ENCODE measurements at regions of chr17 and their contacts with region 1.

Region 1: GRCh38 chr17:45894022-45894784 is at the start of gene MAPT:
- DNase-seq: peak; percentile 93 to 97
- ATAC-seq: peak; percentile 75 to 93
- H3K4me3 ChIP-seq: peak within 1 kb of the TSS; percentile 69
- H3K27ac ChIP-seq: peak within 1 kb of the TSS; percentile 76 to 85
- H3K4me1 ChIP-seq: peaks cover 22% of the 10 kb centered on the region
- CTCF ChIP-seq: peak; percentile 99
- EP300 ChIP-seq: no peak
- POLR2A ChIP-seq: peak; percentile 92
- RAD21 ChIP-seq: peak; percentile 15 to 54; a peak in 4 of 5 replicates
- polyA plus RNA-seq, gene MAPT: 1.1 and 1.2 TPM in 2 replicates

Region 2: DNA sequence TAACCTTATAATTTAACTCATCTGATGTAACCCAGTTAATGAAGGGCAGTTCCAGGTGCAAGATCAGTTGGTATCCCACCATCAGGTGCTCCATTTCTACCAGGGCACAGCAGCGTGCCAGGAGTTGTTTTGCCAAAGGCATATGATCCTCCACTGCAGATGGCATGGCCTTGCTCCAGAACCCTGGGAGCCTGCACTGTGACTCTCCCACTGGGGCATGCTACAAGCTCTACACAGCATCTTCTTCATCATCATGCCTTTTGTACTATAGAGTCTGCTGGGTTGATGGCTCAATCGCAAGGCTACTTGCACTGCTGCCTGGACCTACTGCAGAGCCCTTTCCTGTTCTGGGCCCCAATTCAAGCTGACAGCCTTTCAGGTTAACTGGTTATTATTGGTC is 11.1 kb before region 1 on chr17:
- CTCF ChIA-PET with region 1: interaction called, 11 read pairs
- POLR2A ChIA-PET with region 1: no interaction called
- DNase-seq: no peak
- ATAC-seq: no peak
- H3K4me3 ChIP-seq: no peak overlapping the region
- H3K27ac ChIP-seq: no peak overlapping the region
- H3K4me1 ChIP-seq: no peaks in the 10 kb centered on the region
- CTCF ChIP-seq: no peak
- EP300 ChIP-seq: no peak
- POLR2A ChIP-seq: no peak
- RAD21 ChIP-seq: no peak

Region 3: GRCh38 chr17:45907750-45908395 is 13.7 kb after region 1 on chr17:
- CTCF ChIA-PET with region 1: interaction called, 10 read pairs
- POLR2A ChIA-PET with region 1: no interaction called
- DNase-seq: no peak
- ATAC-seq: no peak
- H3K4me3 ChIP-seq: no peak overlapping the region
- H3K27ac ChIP-seq: no peak overlapping the region
- H3K4me1 ChIP-seq: 0 out of 3 replicates have a peak, but pooled peaks cover 4% of the 10 kb centered on the region
- CTCF ChIP-seq: no peak
- EP300 ChIP-seq: no peak
- POLR2A ChIP-seq: no peak
- RAD21 ChIP-seq: no peak

Region 4: GRCh38 chr17:45930420-45930951 is 36.3 kb after region 1 on chr17:
- CTCF ChIA-PET with region 1: interaction called, 11 read pairs
- POLR2A ChIA-PET with region 1: no interaction called
- DNase-seq: no peak
- ATAC-seq: no peak
- H3K4me3 ChIP-seq: no peak overlapping the region
- H3K27ac ChIP-seq: 0 out of 6 replicates have a peak overlapping the region, but pooled peaks of 1 of the 2 experiments have one; percentile 1
- H3K4me1 ChIP-seq: peaks cover 15% of the 10 kb centered on the region; the same call in 2 of the 3 replicates
- CTCF ChIP-seq: no peak
- EP300 ChIP-seq: no peak
- POLR2A ChIP-seq: no peak
- RAD21 ChIP-seq: no peak